GM12878 (cell line): ENCODE measurements at regions of chr1 and their contacts with region 1.

Region 1: GRCh38 chr1:216221260-216221700 is 202.0 kb downstream of the USH2A start:
- DNase-seq: peak; percentile 27
- ATAC-seq: peak; percentile 100
- H3K4me3 ChIP-seq: 0 out of 2 replicates have a peak overlapping the region, but pooled peaks have one; percentile 30
- H3K27ac ChIP-seq: no peak overlapping the region
- H3K4me1 ChIP-seq: no peaks in the 10 kb centered on the region
- H3K27me3 ChIP-seq: no peaks in the 10 kb centered on the region
- CTCF ChIP-seq: peak; percentile 68 to 78 (median 69)
- EP300 ChIP-seq: no peak
- POLR2A ChIP-seq: no peak
- RAD21 ChIP-seq: peak; percentile 60

Region 2: DNA sequence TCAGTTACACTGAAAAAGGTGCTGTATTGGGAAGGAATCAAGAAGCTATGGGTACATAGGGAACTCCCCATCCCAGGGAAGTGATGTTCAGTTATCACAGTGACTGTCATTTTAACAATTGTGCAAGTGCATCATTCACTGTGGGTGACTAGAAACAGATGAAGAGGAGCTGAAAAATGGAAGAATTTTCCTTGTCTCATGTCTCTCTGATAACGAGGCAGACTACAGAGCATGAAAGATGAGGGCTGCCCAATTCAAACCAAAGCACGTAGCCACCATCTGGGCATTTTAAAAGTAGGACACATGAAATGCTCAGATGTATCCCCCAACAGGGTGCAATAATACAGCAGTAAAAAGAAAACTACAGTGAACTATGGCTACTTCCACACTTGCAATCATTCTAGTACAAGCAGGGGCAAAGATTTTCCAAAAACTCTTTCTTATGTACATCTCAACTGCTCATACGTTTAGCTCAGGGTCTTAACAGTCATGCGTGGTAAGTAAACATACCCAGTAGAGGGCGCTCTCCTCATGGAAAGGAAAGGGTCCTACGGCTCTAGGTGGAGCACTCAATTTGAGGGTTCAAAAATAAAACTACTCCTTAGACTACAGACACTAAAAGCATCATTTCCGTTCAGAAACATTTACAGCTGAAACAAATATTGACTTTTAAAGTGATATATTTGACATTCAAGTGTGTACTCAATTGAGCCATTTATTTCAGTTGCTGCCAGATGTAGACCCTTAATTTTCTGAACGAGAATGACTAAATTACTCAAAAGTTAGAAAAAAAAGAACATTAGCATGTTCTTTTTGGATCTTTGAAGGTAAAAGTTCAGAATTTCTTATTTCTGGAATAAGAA is 511.0 kb before region 1 on chr1:
- CTCF ChIA-PET with region 1: interaction called, 10 read pairs
- POLR2A ChIA-PET with region 1: no interaction called
- RAD21 ChIA-PET with region 1: no interaction called
- SMC1A ChIA-PET with region 1: no interaction called
- in situ Hi-C with region 1: no loop called
- intact Hi-C with region 1: no loop called
- DNase-seq: no peak
- ATAC-seq: peak; percentile 96
- H3K4me3 ChIP-seq: no peak overlapping the region
- H3K27ac ChIP-seq: no peak overlapping the region
- H3K4me1 ChIP-seq: no peaks in the 10 kb centered on the region
- H3K27me3 ChIP-seq: no peaks in the 10 kb centered on the region; a peak in 1 of 4 replicates
- CTCF ChIP-seq: peak; percentile 57 to 74 (median 73)
- EP300 ChIP-seq: no peak
- POLR2A ChIP-seq: no peak
- RAD21 ChIP-seq: peak; percentile 58

Region 3: GRCh38 chr1:215987092-215987875 is 234.0 kb before region 1 on chr1:
- CTCF ChIA-PET with region 1: interaction called, 14 read pairs
- POLR2A ChIA-PET with region 1: no interaction called
- RAD21 ChIA-PET with region 1: interaction called, 6 read pairs
- SMC1A ChIA-PET with region 1: interaction called, 8 read pairs
- in situ Hi-C with region 1: no loop called
- intact Hi-C with region 1: loop called (anchors 2 kb)
- DNase-seq: no peak
- ATAC-seq: no peak
- H3K4me3 ChIP-seq: no peak overlapping the region
- H3K27ac ChIP-seq: no peak overlapping the region
- H3K4me1 ChIP-seq: no peaks in the 10 kb centered on the region
- H3K27me3 ChIP-seq: no peaks in the 10 kb centered on the region; a peak in 1 of 4 replicates
- CTCF ChIP-seq: no peak
- EP300 ChIP-seq: no peak
- POLR2A ChIP-seq: no peak
- RAD21 ChIP-seq: no peak

Region 4: DNA sequence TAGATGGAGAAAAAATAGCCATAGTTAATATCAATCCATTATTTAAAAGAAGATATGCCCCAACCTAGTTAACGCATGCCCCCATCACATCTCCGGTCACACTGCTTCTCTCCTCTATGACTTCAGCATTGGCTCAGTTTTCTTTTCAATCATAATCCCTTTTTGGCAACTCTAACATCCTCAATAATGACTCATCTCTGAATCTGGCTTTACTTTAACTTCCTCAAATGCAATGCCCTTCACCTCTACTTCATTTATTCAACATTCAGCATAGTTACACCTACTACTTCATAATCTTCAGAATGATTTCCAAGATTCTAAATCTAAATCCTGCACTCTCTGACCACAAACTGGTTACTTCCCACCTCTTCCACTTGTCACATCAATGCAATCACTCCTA is 215.4 kb before region 1 on chr1:
- CTCF ChIA-PET with region 1: interaction called, 11 read pairs
- POLR2A ChIA-PET with region 1: no interaction called
- RAD21 ChIA-PET with region 1: interaction called, 14 read pairs
- SMC1A ChIA-PET with region 1: interaction called, 5 read pairs
- in situ Hi-C with region 1: no loop called
- intact Hi-C with region 1: no loop called
- DNase-seq: peak; percentile 53
- ATAC-seq: peak; percentile 97
- H3K4me3 ChIP-seq: no peak overlapping the region
- H3K27ac ChIP-seq: no peak overlapping the region
- H3K4me1 ChIP-seq: no peaks in the 10 kb centered on the region
- H3K27me3 ChIP-seq: no peaks in the 10 kb centered on the region
- CTCF ChIP-seq: no peak
- EP300 ChIP-seq: peak in 1 of 2 experiments; percentile 89; a peak in 2 of 4 replicates
- POLR2A ChIP-seq: no peak
- RAD21 ChIP-seq: no peak

Region 5: GRCh38 chr1:216175714-216176113 is 45.6 kb before region 1 on chr1:
- CTCF ChIA-PET with region 1: interaction called, 13 read pairs
- POLR2A ChIA-PET with region 1: no interaction called
- RAD21 ChIA-PET with region 1: interaction called, 5 read pairs
- SMC1A ChIA-PET with region 1: interaction called, 3 read pairs
- in situ Hi-C with region 1: no loop called
- intact Hi-C with region 1: no loop called
- DNase-seq: no peak
- ATAC-seq: peak; percentile 49
- H3K4me3 ChIP-seq: no peak overlapping the region
- H3K27ac ChIP-seq: no peak overlapping the region
- H3K4me1 ChIP-seq: no peaks in the 10 kb centered on the region
- H3K27me3 ChIP-seq: no peaks in the 10 kb centered on the region
- CTCF ChIP-seq: no peak
- EP300 ChIP-seq: no peak
- POLR2A ChIP-seq: no peak
- RAD21 ChIP-seq: no peak

Region 6: GRCh38 chr1:216207154-216207553 is 14.1 kb before region 1 on chr1:
- CTCF ChIA-PET with region 1: interaction called, 13 read pairs
- POLR2A ChIA-PET with region 1: no interaction called
- RAD21 ChIA-PET with region 1: interaction called, 7 read pairs
- SMC1A ChIA-PET with region 1: interaction called, 10 read pairs
- in situ Hi-C with region 1: no loop called
- intact Hi-C with region 1: no loop called
- DNase-seq: no peak
- ATAC-seq: no peak
- H3K4me3 ChIP-seq: no peak overlapping the region
- H3K27ac ChIP-seq: no peak overlapping the region
- H3K4me1 ChIP-seq: no peaks in the 10 kb centered on the region
- H3K27me3 ChIP-seq: no peaks in the 10 kb centered on the region
- CTCF ChIP-seq: no peak
- EP300 ChIP-seq: no peak
- POLR2A ChIP-seq: no peak
- RAD21 ChIP-seq: no peak